ENCODE measurements at regions of chr6 and their contacts with region 1.

Region 1: GRCh38 chr6:125314019-125314581 is 12.3 kb upstream of the HDDC2 start:
- DNase-seq: peak; percentile 47
- H3K4me3 ChIP-seq: no peak overlapping the region
- H3K27ac ChIP-seq: no peak overlapping the region
- H3K4me1 ChIP-seq: no peaks in the 10 kb centered on the region
- H3K27me3 ChIP-seq: no peaks in the 10 kb centered on the region
- CTCF ChIP-seq: peak; percentile 71 to 88

Region 2: GRCh38 chr6:125512621-125513020 is 198.5 kb after region 1 on chr6:
- CTCF ChIA-PET with region 1: no interaction called
- dilution Hi-C with region 1: no loop called
- in situ Hi-C with region 1: no loop called
- intact Hi-C with region 1: loop called (anchors 10 kb)
- DNase-seq: peak; percentile 2
- H3K4me3 ChIP-seq: no peak overlapping the region
- H3K27ac ChIP-seq: no peak overlapping the region
- H3K4me1 ChIP-seq: no peaks in the 10 kb centered on the region
- H3K27me3 ChIP-seq: no peaks in the 10 kb centered on the region
- CTCF ChIP-seq: peak; percentile 52 to 72

Region 3: GRCh38 chr6:125764121-125764671 is 450.1 kb after region 1 on chr6:
- CTCF ChIA-PET with region 1: no interaction called
- dilution Hi-C with region 1: loop called (anchors 5 kb)
- in situ Hi-C with region 1: loop called (anchors 5 kb)
- intact Hi-C with region 1: loop called (anchors 1 kb)
- DNase-seq: no peak
- H3K4me3 ChIP-seq: no peak overlapping the region
- H3K27ac ChIP-seq: no peak overlapping the region
- H3K4me1 ChIP-seq: no peaks in the 10 kb centered on the region
- H3K27me3 ChIP-seq: peaks cover 2% of the 10 kb centered on the region
- CTCF ChIP-seq: no peak

Region 4: DNA sequence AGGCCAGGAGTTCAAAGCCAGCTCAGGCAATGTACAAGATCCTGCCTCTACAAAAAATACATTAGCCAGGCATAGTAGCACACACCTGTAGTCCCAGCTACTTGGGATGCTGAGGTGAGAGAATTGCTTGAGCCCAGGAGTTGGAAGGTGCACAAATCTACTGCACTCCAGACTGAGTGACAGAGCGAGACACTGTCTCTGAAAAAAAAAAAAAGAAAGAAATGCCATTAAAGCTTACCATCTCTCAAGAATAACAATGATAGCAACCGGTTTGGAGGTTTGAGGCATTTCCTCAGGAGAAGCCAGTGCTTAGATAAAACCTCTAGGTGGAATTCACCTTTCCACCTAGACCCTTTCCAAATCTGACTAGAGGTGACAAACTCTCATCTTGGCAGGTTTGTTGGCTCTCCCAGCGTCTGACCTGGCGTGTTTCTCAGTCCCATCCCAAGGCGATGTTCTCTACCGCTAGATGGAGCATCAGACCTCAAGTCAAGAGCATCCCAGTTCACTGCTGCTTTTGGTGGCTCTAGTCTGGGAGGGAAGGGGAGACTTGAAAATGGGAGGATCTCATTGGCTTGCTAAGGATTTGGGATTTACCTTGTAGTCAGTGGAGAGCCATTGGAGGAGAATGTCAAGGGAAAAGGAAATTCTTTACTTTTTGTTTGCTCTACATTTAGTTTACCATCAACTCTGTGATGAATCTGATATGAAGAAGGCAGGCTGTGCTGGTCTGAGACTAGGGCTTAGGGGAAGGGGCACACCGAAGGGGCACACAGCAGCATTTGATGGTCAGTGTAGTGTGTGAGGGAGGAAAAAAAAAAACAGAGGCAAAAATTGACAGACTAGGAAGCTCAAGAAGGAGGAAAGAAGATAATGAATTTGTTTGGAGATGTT is 544.6 kb after region 1 on chr6:
- CTCF ChIA-PET with region 1: no interaction called
- dilution Hi-C with region 1: no loop called
- in situ Hi-C with region 1: no loop called
- intact Hi-C with region 1: loop called (anchors 5 kb)
- DNase-seq: peak; percentile 73
- H3K4me3 ChIP-seq: no peak overlapping the region
- H3K27ac ChIP-seq: no peak overlapping the region
- H3K4me1 ChIP-seq: no peaks in the 10 kb centered on the region
- H3K27me3 ChIP-seq: no peaks in the 10 kb centered on the region
- CTCF ChIP-seq: peak; percentile 91 to 92

Region 5: DNA sequence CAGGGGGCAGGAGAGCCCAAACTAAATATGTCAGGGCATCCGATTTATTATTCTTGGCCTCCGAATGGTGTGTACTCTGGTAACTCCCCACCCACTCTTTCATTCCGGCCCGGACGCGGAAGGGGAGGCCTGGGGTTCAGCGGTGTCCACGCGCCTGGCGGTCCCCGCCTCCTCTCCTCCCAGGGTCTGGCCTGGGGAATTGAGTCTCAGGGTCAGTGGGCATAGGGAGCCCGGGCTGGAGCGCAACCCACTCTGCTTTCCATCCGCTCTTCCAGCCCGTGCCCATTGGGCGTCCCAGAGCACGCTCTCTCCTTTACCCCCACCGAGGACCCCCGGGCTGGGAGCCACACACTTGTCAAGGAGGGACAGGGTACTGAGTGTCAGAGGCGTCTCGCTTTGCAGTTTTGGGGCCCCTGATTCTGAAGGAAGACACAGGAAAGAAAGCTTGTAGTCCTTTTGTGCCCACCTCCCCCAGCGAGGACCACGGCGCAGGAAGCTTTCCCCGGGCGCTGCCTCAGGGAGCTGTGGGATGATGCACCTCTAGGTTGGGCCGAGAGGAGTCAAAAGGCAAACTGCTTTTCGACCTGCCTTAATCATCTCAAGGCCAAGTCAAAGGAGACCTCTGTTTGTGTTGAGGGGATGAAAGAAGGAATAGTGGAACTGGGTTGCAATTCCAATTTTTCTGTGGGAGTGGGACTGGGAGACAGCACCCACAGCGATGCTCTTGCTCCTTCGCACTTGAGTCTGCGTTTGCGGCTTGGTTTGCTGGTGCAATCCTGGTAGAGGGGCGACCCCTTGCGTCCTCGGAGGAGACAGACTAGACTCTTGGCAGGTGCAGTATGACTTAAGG is 1806.9 kb after region 1 on chr6:
- CTCF ChIA-PET with region 1: no interaction called
- dilution Hi-C with region 1: no loop called
- in situ Hi-C with region 1: no loop called
- intact Hi-C with region 1: loop called (anchors 5 kb)
- DNase-seq: peak; percentile 52
- H3K4me3 ChIP-seq: no peak overlapping the region
- H3K27ac ChIP-seq: no peak overlapping the region
- H3K4me1 ChIP-seq: peaks cover 15% of the 10 kb centered on the region
- H3K27me3 ChIP-seq: peaks cover 38% of the 10 kb centered on the region
- CTCF ChIP-seq: peak; percentile 65 to 89

Measured in mammary epithelial cell (primary cell).